CD4-positive, alpha-beta T cell (primary cell): ENCODE measurements at regions of chr3 and their contacts with region 1.

Region 1: GRCh38 chr3:37855363-37855970 is 6.2 kb upstream of the CTDSPL start:
- DNase-seq: peak; percentile 50 to 85 (median 70)
- ATAC-seq: peak; percentile 47
- H3K4me3 ChIP-seq: no peak overlapping the region
- H3K4me3 Mint-ChIP-seq: peak overlapping the region; percentile 7
- H3K27ac ChIP-seq: no peak overlapping the region
- H3K27ac Mint-ChIP-seq: no peak overlapping the region
- H3K4me1 ChIP-seq: peaks cover 8% of the 10 kb centered on the region
- H3K4me1 Mint-ChIP-seq: peaks cover 8% of the 10 kb centered on the region
- H3K27me3 ChIP-seq: no peaks in the 10 kb centered on the region
- H3K27me3 Mint-ChIP-seq: no peaks in the 10 kb centered on the region
- CTCF ChIP-seq: peak; percentile 89

Region 2: DNA sequence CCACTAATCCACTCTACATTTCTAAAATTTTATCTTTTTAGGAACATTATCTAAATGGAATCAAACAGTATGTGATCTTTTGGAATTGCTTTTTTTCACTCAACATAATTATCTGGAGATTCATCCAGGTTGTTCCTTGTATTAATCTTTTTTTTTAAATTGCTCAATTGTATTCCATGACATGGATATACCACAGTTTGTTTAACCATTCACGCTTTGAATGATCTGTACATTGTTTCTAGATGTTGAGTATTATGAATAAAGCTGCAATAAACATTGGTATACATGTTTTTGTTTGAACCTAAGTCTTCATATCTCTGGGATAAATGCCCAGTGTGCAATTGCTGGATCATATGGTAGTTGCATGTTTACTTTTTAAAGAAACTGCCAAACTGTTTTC is 11.7 kb after region 1 on chr3:
- CTCF ChIA-PET with region 1: interaction called, 11 read pairs
- POLR2A ChIA-PET with region 1: no interaction called
- intact Hi-C with region 1: no loop called
- DNase-seq: no peak
- ATAC-seq: no peak
- H3K4me3 ChIP-seq: no peak overlapping the region
- H3K4me3 Mint-ChIP-seq: no peak overlapping the region
- H3K27ac ChIP-seq: no peak overlapping the region
- H3K27ac Mint-ChIP-seq: no peak overlapping the region
- H3K4me1 ChIP-seq: peaks cover 7% of the 10 kb centered on the region
- H3K4me1 Mint-ChIP-seq: peaks cover 26% of the 10 kb centered on the region
- H3K27me3 ChIP-seq: no peaks in the 10 kb centered on the region
- H3K27me3 Mint-ChIP-seq: no peaks in the 10 kb centered on the region
- CTCF ChIP-seq: no peak

Region 3: DNA sequence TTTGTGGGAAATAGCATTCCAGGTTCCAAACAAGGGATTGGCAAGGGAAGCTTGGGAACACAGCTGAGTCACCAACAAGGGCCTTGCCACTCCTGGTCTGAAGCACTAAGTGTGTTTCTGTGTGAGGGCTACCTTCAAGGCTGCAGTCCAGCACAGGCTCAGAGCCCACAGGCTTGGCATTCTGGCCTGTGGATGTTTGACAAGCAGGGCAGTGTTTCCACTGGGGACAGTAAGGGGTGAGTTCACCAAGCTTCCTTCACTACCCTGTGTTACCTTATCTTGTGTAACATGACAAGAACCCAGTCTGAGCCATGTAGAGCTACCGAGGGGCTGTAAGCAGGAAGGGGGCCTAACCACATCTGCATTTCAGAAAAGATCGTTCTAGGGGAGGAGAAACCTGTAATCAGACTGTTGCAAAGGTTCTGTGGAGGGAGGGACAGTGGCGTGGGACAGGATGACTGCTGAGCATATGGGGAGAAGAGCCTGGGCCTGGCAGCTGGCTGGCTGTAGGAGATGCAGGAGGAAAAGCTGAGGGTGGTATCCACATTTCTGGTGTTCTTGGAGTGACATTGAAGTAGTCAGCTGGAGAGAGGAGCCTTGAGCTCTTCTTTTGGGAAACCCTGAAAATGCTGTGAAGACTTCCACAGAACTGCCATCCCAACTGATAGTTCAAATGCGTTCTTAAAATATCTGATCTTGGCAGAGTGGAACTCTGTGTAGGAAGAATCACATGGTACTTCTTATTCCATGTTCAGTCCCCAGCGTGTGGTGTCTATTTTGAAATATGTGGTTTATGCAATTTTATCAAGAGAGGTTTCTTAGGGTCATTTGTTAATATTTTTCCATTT is 67.5 kb after region 1 on chr3:
- CTCF ChIA-PET with region 1: no interaction called
- POLR2A ChIA-PET with region 1: no interaction called
- intact Hi-C with region 1: no loop called
- DNase-seq: no peak
- ATAC-seq: no peak
- H3K4me3 ChIP-seq: no peak overlapping the region
- H3K4me3 Mint-ChIP-seq: no peak overlapping the region
- H3K27ac ChIP-seq: no peak overlapping the region
- H3K27ac Mint-ChIP-seq: no peak overlapping the region
- H3K4me1 ChIP-seq: no peaks in the 10 kb centered on the region
- H3K4me1 Mint-ChIP-seq: no peaks in the 10 kb centered on the region
- H3K27me3 ChIP-seq: no peaks in the 10 kb centered on the region
- H3K27me3 Mint-ChIP-seq: no peaks in the 10 kb centered on the region
- CTCF ChIP-seq: no peak

Region 4: GRCh38 chr3:37967260-37967881 is 111.9 kb after region 1 on chr3:
- CTCF ChIA-PET with region 1: interaction called, 40 read pairs
- POLR2A ChIA-PET with region 1: interaction called, 6 read pairs
- intact Hi-C with region 1: loop called (anchors 1 kb)
- DNase-seq: peak; percentile 33 to 77 (median 51)
- ATAC-seq: peak; percentile 85
- H3K4me3 ChIP-seq: no peak overlapping the region
- H3K4me3 Mint-ChIP-seq: no peak overlapping the region
- H3K27ac ChIP-seq: no peak overlapping the region
- H3K27ac Mint-ChIP-seq: no peak overlapping the region
- H3K4me1 ChIP-seq: peaks cover 4% of the 10 kb centered on the region
- H3K4me1 Mint-ChIP-seq: peaks cover 6% of the 10 kb centered on the region
- H3K27me3 ChIP-seq: no peaks in the 10 kb centered on the region
- H3K27me3 Mint-ChIP-seq: no peaks in the 10 kb centered on the region
- CTCF ChIP-seq: peak; percentile 79